HCT116 (cell line): ENCODE measurements at regions of chr19 and their contacts with region 1.

Region 1: DNA sequence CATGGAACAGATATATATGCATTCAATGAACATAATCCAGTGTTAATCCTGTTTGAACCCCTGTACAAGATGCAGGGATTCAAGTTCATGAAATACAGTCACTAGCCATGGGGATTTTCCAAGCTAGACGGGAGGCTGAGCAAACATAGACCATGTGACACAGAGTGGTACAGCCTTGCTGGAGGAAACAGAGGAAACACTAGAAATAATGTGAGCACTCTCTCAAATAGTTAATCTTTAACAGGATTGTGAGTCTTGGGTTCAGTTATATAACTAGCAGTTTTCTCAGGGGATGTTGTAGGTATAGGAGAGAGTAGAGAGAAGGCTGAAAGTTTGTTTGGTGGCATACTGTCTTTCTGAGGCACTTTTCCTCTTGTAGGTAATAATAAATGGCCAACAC is 13.9 kb upstream of the LGALS16 start:
- DNase-seq: no peak
- ATAC-seq: no peak
- H3K4me3 ChIP-seq: no peak overlapping the region
- H3K27ac ChIP-seq: no peak overlapping the region
- H3K4me1 ChIP-seq: no peaks in the 10 kb centered on the region
- H3K27me3 ChIP-seq: peaks cover 52% of the 10 kb centered on the region
- CTCF ChIP-seq: no peak
- POLR2A ChIP-seq: no peak
- RAD21 ChIP-seq: no peak

Region 2: GRCh38 chr19:39599116-39599515 is 42.7 kb before region 1 on chr19:
- CTCF ChIA-PET with region 1: no interaction called
- POLR2A ChIA-PET with region 1: no interaction called
- RAD21 ChIA-PET with region 1: no interaction called
- intact Hi-C with region 1: loop called (anchors 5 kb)
- DNase-seq: no peak
- ATAC-seq: no peak
- H3K4me3 ChIP-seq: no peak overlapping the region
- H3K27ac ChIP-seq: no peak overlapping the region
- H3K4me1 ChIP-seq: no peaks in the 10 kb centered on the region
- H3K27me3 ChIP-seq: peaks cover 53% of the 10 kb centered on the region
- CTCF ChIP-seq: no peak
- POLR2A ChIP-seq: no peak
- RAD21 ChIP-seq: no peak

Region 3: DNA sequence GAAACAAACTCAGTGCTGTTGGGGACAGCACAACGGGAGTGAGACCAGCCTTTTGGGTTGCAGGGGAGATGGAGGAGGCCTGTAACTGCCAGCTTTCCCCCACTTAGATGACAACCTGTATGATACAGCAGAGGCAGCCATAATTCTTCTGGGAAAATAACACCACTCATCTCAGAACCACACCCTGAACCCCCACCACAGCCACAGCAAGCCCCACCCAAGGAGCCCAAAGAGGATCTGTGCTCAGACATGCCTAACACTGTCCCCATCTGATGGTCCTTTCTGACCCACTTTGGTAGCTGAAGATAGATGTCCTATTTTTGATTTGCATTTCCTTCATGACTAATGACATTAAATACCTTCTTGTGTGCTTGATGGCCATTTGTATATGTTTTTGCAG is 24.0 kb before region 1 on chr19:
- CTCF ChIA-PET with region 1: no interaction called
- POLR2A ChIA-PET with region 1: no interaction called
- RAD21 ChIA-PET with region 1: no interaction called
- intact Hi-C with region 1: no loop called
- DNase-seq: no peak
- ATAC-seq: no peak
- H3K4me3 ChIP-seq: no peak overlapping the region
- H3K27ac ChIP-seq: no peak overlapping the region
- H3K4me1 ChIP-seq: no peaks in the 10 kb centered on the region
- H3K27me3 ChIP-seq: peaks cover 41% of the 10 kb centered on the region
- CTCF ChIP-seq: no peak
- POLR2A ChIP-seq: no peak
- RAD21 ChIP-seq: no peak